ENCODE measurements at regions of chr1 and their contacts with region 1.

Region 1: GRCh38 chr1:165768513-165769394 is at the start of gene TMCO1:
- DNase-seq: peak; percentile 98
- H3K4me3 ChIP-seq: peak within 1 kb of the TSS; percentile 72 to 85 (median 78)
- H3K27ac ChIP-seq: peak within 1 kb of the TSS; percentile 85 to 92 (median 88)
- H3K4me1 ChIP-seq: peaks cover 0 to 45% (median 22%) of the 10 kb centered on the region in 4 donors
- H3K27me3 ChIP-seq: no peaks in the 10 kb centered on the region
- CTCF ChIP-seq: no peak
- EP300 ChIP-seq: peak in 1 of 4 donors; percentile 57
- POLR2A ChIP-seq: peak; percentile 41 to 58
- total RNA-seq, gene TMCO1: 36.7 to 71.3 (median 43.3) TPM

Region 2: DNA sequence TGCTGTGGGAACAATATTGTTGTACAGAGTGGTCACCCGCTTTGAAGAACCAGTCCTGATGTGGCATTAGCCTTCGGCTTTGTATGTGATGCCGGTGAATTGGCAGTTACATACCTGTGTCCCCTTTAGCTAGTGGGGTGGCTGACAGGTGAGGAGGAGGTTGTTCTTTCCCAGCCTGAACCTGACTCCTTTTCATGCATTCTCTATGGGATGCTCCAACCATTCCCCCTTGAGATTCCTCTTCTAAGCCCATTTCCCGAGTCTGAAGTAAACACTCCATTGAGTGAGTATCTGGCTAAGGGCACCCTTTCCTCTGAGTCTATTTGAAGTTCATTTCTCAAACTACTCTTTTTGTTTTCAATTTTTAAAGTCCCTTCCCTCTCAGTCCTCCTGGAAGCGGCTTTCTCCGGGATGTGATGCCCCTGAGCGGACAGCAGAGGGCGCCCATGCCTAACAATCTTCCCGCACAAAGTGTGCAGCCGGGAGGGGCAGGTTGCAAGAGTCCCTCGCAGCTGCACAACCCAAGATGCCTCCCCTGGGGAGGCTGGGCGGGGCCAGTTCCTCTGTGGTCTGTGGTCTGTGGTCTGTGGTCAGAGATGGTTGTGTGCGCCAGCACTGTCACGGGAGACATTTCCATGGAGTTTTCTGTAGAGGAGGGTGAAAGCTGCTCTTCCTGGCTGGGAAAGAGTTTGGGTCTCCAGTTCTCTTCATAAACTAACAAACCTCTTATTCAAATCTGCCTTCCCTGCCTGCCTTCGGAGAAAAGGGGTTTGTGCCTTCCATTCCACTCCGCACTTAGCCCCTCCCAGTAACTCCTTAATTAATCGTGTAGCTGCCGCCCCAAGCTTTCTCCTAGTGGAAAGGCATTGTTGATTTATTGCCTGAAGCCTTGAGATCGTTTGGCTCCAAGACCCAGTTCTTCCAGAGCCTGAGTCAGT is 375.9 kb before region 1 on chr1:
- intact Hi-C with region 1: loop called (anchors 10 kb)
- DNase-seq: peak; percentile 92
- H3K4me3 ChIP-seq: peak overlapping the region in 3 of 4 donors; percentile 5 to 24 (median 23)
- H3K27ac ChIP-seq: peak overlapping the region in 1 of 4 donors; percentile 47
- H3K4me1 ChIP-seq: peaks cover 0 to 8% (median 6%) of the 10 kb centered on the region in 4 donors
- H3K27me3 ChIP-seq: no peaks in the 10 kb centered on the region
- CTCF ChIP-seq: peak; percentile 66 to 95 (median 80)
- EP300 ChIP-seq: no peak
- POLR2A ChIP-seq: no peak

Region 3: GRCh38 chr1:165630629-165631341 is 138.0 kb before region 1 on chr1 and contains the start of gene MGST3:
- intact Hi-C with region 1: loop called (anchors 2 kb)
- DNase-seq: peak; percentile 97
- H3K4me3 ChIP-seq: peak within 1 kb of the TSS; percentile 55 to 88 (median 74)
- H3K27ac ChIP-seq: peak within 1 kb of the TSS; percentile 81 to 93 (median 90)
- H3K4me1 ChIP-seq: peaks cover 0 to 46% (median 40%) of the 10 kb centered on the region in 4 donors
- H3K27me3 ChIP-seq: no peaks in the 10 kb centered on the region
- CTCF ChIP-seq: no peak
- EP300 ChIP-seq: no peak
- POLR2A ChIP-seq: peak; percentile 78 to 81
- total RNA-seq, gene MGST3: 162 to 269 (median 201) TPM

Region 4: GRCh38 chr1:165697881-165698760 is 70.6 kb before region 1 on chr1 and contains the start of gene ALDH9A1:
- intact Hi-C with region 1: loop called (anchors 2 kb)
- DNase-seq: peak; percentile 95
- H3K4me3 ChIP-seq: peak within 1 kb of the TSS; percentile 66 to 79 (median 70)
- H3K27ac ChIP-seq: peak within 1 kb of the TSS; percentile 91 to 97 (median 94)
- H3K4me1 ChIP-seq: peaks cover 0 to 32% (median 23%) of the 10 kb centered on the region in 4 donors
- H3K27me3 ChIP-seq: no peaks in the 10 kb centered on the region
- CTCF ChIP-seq: peak in 3 of 4 experiments; percentile 12 to 46 (median 36)
- EP300 ChIP-seq: no peak
- POLR2A ChIP-seq: peak; percentile 64 to 78
- total RNA-seq, gene ALDH9A1: 59.4 to 98.5 (median 86.9) TPM

Region 5: DNA sequence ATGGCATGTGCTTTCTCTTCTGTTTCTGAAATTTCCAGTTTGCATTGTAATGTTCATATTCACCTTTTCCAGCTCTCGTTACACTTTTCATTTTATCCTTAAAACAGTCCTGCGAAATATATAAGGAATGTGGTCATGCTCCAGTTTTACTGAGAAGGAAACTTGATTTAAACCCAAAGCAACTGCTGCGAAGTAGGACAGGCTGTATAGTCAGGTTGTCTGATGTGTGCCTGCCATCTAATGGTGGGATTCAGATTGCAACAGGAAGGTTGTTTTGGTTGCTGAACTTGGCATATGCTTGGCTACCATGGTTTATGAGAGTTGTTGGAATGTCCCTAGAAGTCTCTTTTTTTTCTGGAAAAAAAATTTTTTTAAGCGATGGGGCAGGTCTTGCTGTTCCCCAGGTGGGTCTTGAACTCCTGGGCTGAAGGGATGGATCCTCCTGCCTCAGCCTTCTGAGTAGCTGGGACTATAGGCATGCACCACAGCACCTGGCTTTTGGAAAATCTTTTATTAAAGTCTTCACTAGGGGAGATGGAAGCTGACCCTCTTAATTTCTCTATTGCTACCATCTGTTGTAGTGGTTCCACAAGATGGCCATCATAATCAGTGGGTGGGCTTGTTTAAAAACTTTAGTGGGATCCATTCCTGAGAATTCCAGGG is 145.5 kb after region 1 on chr1:
- intact Hi-C with region 1: loop called (anchors 5 kb)
- DNase-seq: peak; percentile 69
- H3K4me3 ChIP-seq: no peak overlapping the region
- H3K27ac ChIP-seq: no peak overlapping the region
- H3K4me1 ChIP-seq: peaks cover 0 to 6% (median 0%) of the 10 kb centered on the region in 4 donors
- H3K27me3 ChIP-seq: no peaks in the 10 kb centered on the region
- CTCF ChIP-seq: peak; percentile 78 to 89 (median 88)
- EP300 ChIP-seq: no peak
- POLR2A ChIP-seq: no peak